ENCODE measurements at regions of chr1 and their contacts with region 1.

Region 1: DNA sequence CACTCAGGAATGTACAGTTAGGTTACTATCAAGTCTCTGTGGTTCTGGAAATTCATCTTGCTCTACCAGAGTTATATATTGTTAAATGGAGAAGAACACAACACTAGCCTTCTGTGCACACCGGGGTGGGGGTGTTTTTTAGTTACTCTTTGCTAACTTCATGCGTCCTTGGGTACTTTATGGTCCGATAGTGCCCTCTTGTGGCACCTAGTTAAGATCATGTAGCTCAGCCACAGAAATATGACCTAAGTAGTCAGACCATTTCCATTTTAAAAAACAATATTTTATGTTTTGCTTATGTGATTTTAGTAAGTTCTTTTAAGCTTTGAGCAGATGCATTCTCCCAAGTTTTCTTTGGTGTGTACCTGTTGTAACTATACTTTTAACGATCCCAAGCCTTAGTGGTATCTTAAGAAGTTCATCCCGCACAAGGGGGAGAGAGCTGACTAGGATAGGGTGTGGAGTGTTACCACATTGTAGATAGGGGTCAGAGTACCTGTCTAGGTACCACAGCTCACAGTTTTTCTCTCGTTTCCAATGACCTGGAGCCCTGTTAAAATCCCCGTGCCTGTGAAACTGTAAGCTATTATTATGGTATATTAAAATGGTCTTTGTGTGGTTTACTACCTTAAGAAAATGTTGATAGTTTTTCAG is 20.6 kb upstream of the SH3D21 start:
- DNase-seq: peak; percentile 41
- ATAC-seq: peak; percentile 96
- H3K4me3 ChIP-seq: no peak overlapping the region
- H3K27ac ChIP-seq: no peak overlapping the region
- H3K4me1 ChIP-seq: no peaks in the 10 kb centered on the region; the same call in 1 of the 2 replicates
- H3K27me3 ChIP-seq: no peaks in the 10 kb centered on the region
- CTCF ChIP-seq: peak; percentile 56 to 78 (median 67)
- EP300 ChIP-seq: no peak
- POLR2A ChIP-seq: no peak
- RAD21 ChIP-seq: peak; percentile 84

Region 2: GRCh38 chr1:36134505-36135329 is 150.9 kb before region 1 on chr1:
- CTCF ChIA-PET with region 1: interaction called, 12 read pairs
- POLR2A ChIA-PET with region 1: no interaction called
- RAD21 ChIA-PET with region 1: interaction called, 8 read pairs
- SMC1A ChIA-PET with region 1: interaction called, 3 read pairs
- in situ Hi-C with region 1: no loop called
- intact Hi-C with region 1: no loop called
- DNase-seq: no peak
- ATAC-seq: peak; percentile 96
- H3K4me3 ChIP-seq: no peak overlapping the region
- H3K27ac ChIP-seq: no peak overlapping the region
- H3K4me1 ChIP-seq: no peaks in the 10 kb centered on the region
- H3K27me3 ChIP-seq: no peaks in the 10 kb centered on the region
- CTCF ChIP-seq: peak; percentile 62 to 70 (median 69)
- EP300 ChIP-seq: no peak
- POLR2A ChIP-seq: no peak
- RAD21 ChIP-seq: peak; percentile 73

Region 3: DNA sequence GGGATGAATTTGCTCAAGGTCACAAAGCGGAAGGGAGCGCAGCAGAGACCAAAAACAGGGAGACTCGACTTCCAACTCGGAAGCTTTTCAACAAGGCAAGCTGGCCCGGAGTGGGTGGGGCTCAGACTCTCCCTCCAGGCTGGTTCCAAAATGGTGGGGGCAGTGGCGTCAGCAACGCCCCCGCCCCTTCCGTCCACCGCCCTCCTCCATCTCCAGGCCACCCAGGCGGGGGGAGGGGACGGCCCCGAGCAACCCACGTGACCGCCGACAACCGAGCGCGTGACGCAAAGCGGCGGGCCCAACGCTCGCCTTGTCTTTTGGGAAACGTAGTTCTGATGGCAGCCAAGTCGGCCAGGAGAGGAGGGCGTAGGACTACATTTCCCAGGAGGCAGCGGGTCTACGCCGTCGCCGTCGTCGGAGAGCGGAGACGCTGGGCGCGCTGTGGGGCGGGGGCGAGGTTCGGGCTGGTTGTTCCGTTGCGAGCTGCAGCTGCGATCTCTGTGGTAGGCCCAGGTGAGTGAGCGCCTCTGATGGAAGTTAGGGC is 61.5 kb before region 1 on chr1 and contains the start of gene THRAP3:
- CTCF ChIA-PET with region 1: interaction called, 18 read pairs
- POLR2A ChIA-PET with region 1: interaction called, 8 read pairs
- RAD21 ChIA-PET with region 1: interaction called, 23 read pairs
- SMC1A ChIA-PET with region 1: interaction called, 21 read pairs
- in situ Hi-C with region 1: no loop called
- intact Hi-C with region 1: no loop called
- DNase-seq: peak; percentile 97
- ATAC-seq: peak; percentile 95
- H3K4me3 ChIP-seq: peak within 1 kb of the TSS; percentile 95
- H3K27ac ChIP-seq: peak within 1 kb of the TSS; percentile 88
- H3K4me1 ChIP-seq: peaks cover 7% of the 10 kb centered on the region; the same call in 1 of the 2 replicates
- H3K27me3 ChIP-seq: no peaks in the 10 kb centered on the region
- CTCF ChIP-seq: no peak
- EP300 ChIP-seq: 0 out of 4 replicates have a peak, but pooled peaks of 1 of the 2 experiments have one; percentile 17
- POLR2A ChIP-seq: peak; percentile 91
- RAD21 ChIP-seq: no peak
- polyA plus RNA-seq, gene THRAP3: 76.3 to 173 TPM

Region 4: GRCh38 chr1:36300526-36300925 is 15.0 kb after region 1 on chr1:
- CTCF ChIA-PET with region 1: interaction called, 13 read pairs
- POLR2A ChIA-PET with region 1: interaction called, 4 read pairs
- RAD21 ChIA-PET with region 1: no interaction called
- SMC1A ChIA-PET with region 1: interaction called, 5 read pairs
- in situ Hi-C with region 1: no loop called
- intact Hi-C with region 1: no loop called
- DNase-seq: no peak
- ATAC-seq: no peak
- H3K4me3 ChIP-seq: no peak overlapping the region
- H3K27ac ChIP-seq: no peak overlapping the region
- H3K4me1 ChIP-seq: peaks cover 10% of the 10 kb centered on the region
- H3K27me3 ChIP-seq: no peaks in the 10 kb centered on the region
- CTCF ChIP-seq: no peak
- EP300 ChIP-seq: no peak
- POLR2A ChIP-seq: no peak
- RAD21 ChIP-seq: no peak

Region 5: GRCh38 chr1:36420836-36421664 is 135.5 kb after region 1 on chr1:
- CTCF ChIA-PET with region 1: interaction called, 13 read pairs
- POLR2A ChIA-PET with region 1: interaction called, 3 read pairs
- RAD21 ChIA-PET with region 1: interaction called, 8 read pairs
- SMC1A ChIA-PET with region 1: interaction called, 7 read pairs
- in situ Hi-C with region 1: no loop called
- intact Hi-C with region 1: no loop called
- DNase-seq: peak; percentile 74
- ATAC-seq: peak; percentile 100
- H3K4me3 ChIP-seq: no peak overlapping the region
- H3K27ac ChIP-seq: peak overlapping the region; percentile 31; the same call in 1 of the 2 replicates
- H3K4me1 ChIP-seq: peaks cover 6% of the 10 kb centered on the region; the same call in 1 of the 2 replicates
- H3K27me3 ChIP-seq: no peaks in the 10 kb centered on the region
- CTCF ChIP-seq: peak; percentile 95 to 98 (median 96); a peak in 5 of 6 replicates
- EP300 ChIP-seq: no peak
- POLR2A ChIP-seq: no peak
- RAD21 ChIP-seq: peak; percentile 97

Region 6: DNA sequence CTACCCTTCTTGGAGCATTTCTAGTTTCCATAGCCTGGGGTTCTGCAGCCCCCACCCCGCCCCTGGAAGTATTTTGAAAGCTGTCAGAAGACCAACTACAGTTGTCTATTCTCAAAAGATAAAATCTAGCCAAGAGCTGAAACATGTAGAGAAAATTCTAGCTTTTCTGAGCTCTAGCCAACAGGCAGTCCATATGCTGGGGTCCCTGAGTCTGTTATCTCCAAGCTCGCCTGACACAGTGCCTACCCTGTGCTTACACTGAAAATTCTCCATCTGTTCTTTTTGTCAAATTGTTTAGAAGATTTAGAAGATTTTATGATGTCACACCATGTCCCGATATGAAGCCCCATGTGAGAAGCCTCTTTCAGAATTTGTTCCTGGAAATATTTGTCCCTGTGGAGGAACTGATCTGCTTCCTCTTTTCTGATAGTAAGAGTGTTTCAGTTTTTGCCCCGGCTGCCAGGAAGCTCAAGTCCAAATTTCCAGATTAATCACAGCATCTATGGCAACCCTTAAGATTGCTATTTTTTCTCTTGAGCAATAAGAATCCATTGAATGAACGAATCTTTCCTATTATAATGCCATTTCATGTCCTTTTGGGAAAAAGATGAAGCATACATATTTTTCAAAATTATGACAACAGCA is 220.8 kb after region 1 on chr1:
- CTCF ChIA-PET with region 1: no interaction called
- POLR2A ChIA-PET with region 1: no interaction called
- RAD21 ChIA-PET with region 1: no interaction called
- SMC1A ChIA-PET with region 1: no interaction called
- in situ Hi-C with region 1: no loop called
- intact Hi-C with region 1: no loop called
- DNase-seq: no peak
- ATAC-seq: no peak
- H3K4me3 ChIP-seq: no peak overlapping the region
- H3K27ac ChIP-seq: no peak overlapping the region
- H3K4me1 ChIP-seq: no peaks in the 10 kb centered on the region
- H3K27me3 ChIP-seq: peaks cover 0 to 4% of the 10 kb centered on the region in 2 experiments; a peak in 1 of 4 replicates
- CTCF ChIP-seq: no peak
- EP300 ChIP-seq: no peak
- POLR2A ChIP-seq: no peak
- RAD21 ChIP-seq: no peak

Measured in GM12878 (cell line).